Naive thymus-derived CD8-positive, alpha-beta T cell (primary cell): ENCODE measurements at regions of chrX and their contacts with region 1.

Region 1: DNA sequence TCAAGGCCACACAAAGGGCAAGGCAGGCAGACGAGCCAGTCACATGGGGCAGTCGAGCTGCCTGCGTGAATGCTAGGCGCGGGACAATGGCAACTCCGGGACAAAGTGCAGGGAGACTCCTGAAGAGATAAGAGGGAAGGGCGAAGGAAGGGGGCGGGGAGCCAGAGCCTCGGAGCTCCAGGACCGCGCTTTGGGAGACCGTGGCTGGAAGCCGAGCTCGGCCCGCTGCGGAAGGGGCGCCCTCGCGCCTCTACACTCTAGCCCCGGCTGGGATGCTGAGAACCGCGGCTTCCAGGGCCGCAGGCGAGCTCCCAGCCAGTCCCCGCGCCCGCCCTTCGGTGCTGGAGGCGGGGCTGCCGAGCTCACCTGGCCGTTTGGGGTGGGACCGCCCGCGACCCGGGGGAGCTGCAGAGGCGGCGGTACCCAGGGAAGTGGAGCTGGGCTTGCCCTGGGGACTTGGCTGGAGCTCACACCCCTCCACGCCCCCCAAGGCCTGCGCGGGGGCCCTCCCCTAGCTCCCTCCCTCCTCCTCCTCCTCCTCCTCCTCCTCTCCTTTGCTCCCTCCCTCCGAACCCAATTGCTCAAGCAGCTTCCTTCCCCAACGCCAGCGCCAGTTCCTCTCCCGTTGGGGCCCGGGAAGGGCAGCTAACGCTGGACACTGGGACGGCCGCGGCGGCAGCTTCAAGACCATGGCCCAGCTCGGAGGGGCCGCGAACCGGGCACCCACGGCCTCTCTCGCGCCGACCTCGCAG is at the start of gene SOWAHD:
- DNase-seq: peak in 7 of 10 donors; percentile 22 to 47 (median 32)
- ATAC-seq: peak; percentile 28 to 45
- H3K4me3 Mint-ChIP-seq: peak within 1 kb of the TSS; percentile 62 to 90 (median 80)
- H3K27ac Mint-ChIP-seq: peak within 1 kb of the TSS; percentile 95 to 98 (median 96)
- H3K4me1 Mint-ChIP-seq: peaks cover 20 to 58% (median 52%) of the 10 kb centered on the region in 4 donors
- H3K27me3 Mint-ChIP-seq: no peaks in the 10 kb centered on the region
- polyA plus RNA-seq, gene SOWAHD: 0.43 to 1.1 (median 0.47) TPM

Region 2: DNA sequence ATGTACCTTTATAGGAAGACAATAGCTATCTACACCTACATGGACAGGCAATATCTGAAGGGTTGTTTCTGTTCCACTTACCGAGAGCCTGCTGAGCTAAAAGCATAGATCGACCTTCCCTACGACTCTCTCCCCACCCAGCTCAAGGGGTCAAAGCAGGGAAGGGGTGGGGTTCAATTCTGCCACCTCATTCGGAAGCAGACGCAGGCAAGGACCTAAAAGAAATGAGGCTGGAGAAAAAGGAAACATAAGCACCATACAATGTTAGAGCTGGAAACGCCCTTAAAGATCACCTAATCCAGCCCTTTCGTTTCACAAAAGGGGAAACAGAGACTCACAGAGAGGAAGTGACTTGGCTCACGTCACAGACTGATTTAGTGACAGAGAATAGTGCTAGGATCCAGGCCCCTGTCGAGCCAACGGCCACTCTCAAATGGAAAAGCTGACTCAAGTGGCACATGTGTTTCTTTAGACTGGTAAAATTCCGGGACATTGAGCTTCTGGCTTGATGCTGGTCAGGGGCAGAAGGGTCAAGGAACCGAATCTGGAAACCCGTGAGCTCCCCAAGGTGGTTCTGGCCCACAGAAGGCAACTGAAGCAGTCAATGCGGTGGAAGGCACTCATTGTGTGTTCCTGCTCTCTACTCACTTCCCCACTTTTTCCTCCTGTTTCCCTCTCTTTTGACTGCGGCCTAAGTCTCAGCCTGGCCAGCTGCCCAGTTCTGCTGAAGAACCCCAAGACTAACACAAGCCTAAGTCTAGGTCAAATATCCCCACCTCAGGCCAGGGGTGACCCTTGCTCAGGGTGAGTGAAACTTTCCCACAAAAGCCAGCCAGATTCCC is 72.7 kb before region 1 on chrX:
- POLR2A ChIA-PET with region 1: interaction called, 15 read pairs
- DNase-seq: peak in 5 of 10 donors; percentile 19 to 66 (median 62)
- ATAC-seq: peak; percentile 15 to 29
- H3K4me3 Mint-ChIP-seq: peak overlapping the region; percentile 75 to 100 (median 97)
- H3K27ac Mint-ChIP-seq: peak overlapping the region; percentile 89 to 100 (median 98)
- H3K4me1 Mint-ChIP-seq: peaks cover 11 to 81% (median 58%) of the 10 kb centered on the region in 4 donors
- H3K27me3 Mint-ChIP-seq: no peaks in the 10 kb centered on the region

Region 3: DNA sequence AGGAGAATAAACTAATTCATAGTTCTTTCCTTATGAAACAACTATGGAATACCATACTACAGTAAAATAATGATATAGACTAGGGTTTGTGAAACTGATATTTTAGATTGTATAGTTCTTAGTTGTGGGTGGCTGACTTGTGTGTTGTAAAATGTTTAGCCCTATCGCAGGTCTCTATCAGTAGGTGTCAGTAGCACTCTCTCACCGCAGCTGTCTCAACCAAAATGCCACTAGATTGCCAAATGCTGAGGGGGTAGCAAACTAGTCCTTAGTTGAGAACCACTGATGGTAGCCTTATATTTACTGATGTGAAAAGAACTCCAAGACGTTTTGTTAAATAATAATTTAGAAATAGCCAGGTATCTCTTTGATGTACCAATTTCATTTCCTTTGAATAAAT is 271.2 kb after region 1 on chrX:
- POLR2A ChIA-PET with region 1: no interaction called
- DNase-seq: no peak
- ATAC-seq: no peak
- H3K4me3 Mint-ChIP-seq: no peak overlapping the region
- H3K27ac Mint-ChIP-seq: no peak overlapping the region
- H3K4me1 Mint-ChIP-seq: no peaks in the 10 kb centered on the region
- H3K27me3 Mint-ChIP-seq: peaks cover 4 to 15% (median 7%) of the 10 kb centered on the region in 5 donors